ENCODE measurements at regions of chr16 and their contacts with region 1.

Region 1: GRCh38 chr16:52896484-52897164 is 156.1 kb downstream of the CHD9NB start:
- DNase-seq: no peak
- ATAC-seq: no peak
- H3K4me3 ChIP-seq: no peak overlapping the region
- H3K4me3 Mint-ChIP-seq: no peak overlapping the region
- H3K27ac ChIP-seq: no peak overlapping the region
- H3K27ac Mint-ChIP-seq: no peak overlapping the region
- H3K4me1 ChIP-seq: no peaks in the 10 kb centered on the region
- H3K4me1 Mint-ChIP-seq: no peaks in the 10 kb centered on the region
- H3K27me3 ChIP-seq: no peaks in the 10 kb centered on the region
- H3K27me3 Mint-ChIP-seq: peaks cover 10% of the 10 kb centered on the region
- CTCF ChIP-seq: no peak

Region 2: GRCh38 chr16:52861614-52862022 is 35.0 kb before region 1 on chr16:
- CTCF ChIA-PET with region 1: no interaction called
- POLR2A ChIA-PET with region 1: no interaction called
- intact Hi-C with region 1: no loop called
- DNase-seq: no peak
- ATAC-seq: no peak
- H3K4me3 ChIP-seq: no peak overlapping the region
- H3K4me3 Mint-ChIP-seq: no peak overlapping the region
- H3K27ac ChIP-seq: no peak overlapping the region
- H3K27ac Mint-ChIP-seq: no peak overlapping the region
- H3K4me1 ChIP-seq: no peaks in the 10 kb centered on the region
- H3K4me1 Mint-ChIP-seq: no peaks in the 10 kb centered on the region
- H3K27me3 ChIP-seq: no peaks in the 10 kb centered on the region
- H3K27me3 Mint-ChIP-seq: peaks cover under 1% of the 10 kb centered on the region
- CTCF ChIP-seq: no peak

Region 3: DNA sequence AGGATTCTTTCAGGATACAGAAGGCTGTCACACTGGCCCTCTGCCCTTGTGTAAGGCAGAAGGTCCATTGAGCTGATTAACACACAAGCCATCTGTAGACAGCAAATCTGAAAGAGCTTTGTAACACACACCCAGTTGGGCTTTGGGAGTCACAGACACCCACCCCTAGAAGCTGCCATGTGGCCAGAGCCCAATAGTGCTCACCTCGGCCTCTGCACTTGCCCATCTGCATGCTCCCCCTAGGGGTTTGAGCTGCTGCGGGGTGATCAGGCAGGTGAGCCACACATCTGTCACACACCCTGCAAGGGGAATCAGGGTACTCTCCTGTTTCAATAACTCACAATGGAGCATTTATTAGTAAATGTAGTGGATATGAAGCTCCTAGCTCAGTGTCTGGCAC is 17.8 kb after region 1 on chr16:
- CTCF ChIA-PET with region 1: no interaction called
- POLR2A ChIA-PET with region 1: no interaction called
- intact Hi-C with region 1: loop called in 1 of 2 experiments (anchors 1 kb)
- DNase-seq: no peak
- ATAC-seq: no peak
- H3K4me3 ChIP-seq: no peak overlapping the region
- H3K4me3 Mint-ChIP-seq: no peak overlapping the region
- H3K27ac ChIP-seq: no peak overlapping the region
- H3K27ac Mint-ChIP-seq: no peak overlapping the region
- H3K4me1 ChIP-seq: no peaks in the 10 kb centered on the region
- H3K4me1 Mint-ChIP-seq: no peaks in the 10 kb centered on the region
- H3K27me3 ChIP-seq: peaks cover 2 to 6% of the 10 kb centered on the region in 2 experiments
- H3K27me3 Mint-ChIP-seq: peaks cover 17% of the 10 kb centered on the region
- CTCF ChIP-seq: no peak